ENCODE measurements at regions of chr9 and their contacts with region 1.

Region 1: GRCh38 chr9:13971966-13972655 is 341.8 kb downstream of the NFIB start:
- DNase-seq: no peak
- ATAC-seq: peak; percentile 10 to 60
- H3K4me3 ChIP-seq: no peak overlapping the region
- H3K27ac ChIP-seq: peak overlapping the region; percentile 24
- H3K4me1 ChIP-seq: peaks cover 15% of the 10 kb centered on the region
- H3K27me3 ChIP-seq: no peaks in the 10 kb centered on the region

Region 2: GRCh38 chr9:13750061-13750460 is 222.1 kb before region 1 on chr9:
- intact Hi-C with region 1: no loop called
- DNase-seq: no peak
- ATAC-seq: peak in 1 of 2 donors; percentile 55
- H3K4me3 ChIP-seq: no peak overlapping the region
- H3K27ac ChIP-seq: no peak overlapping the region
- H3K4me1 ChIP-seq: no peaks in the 10 kb centered on the region
- H3K27me3 ChIP-seq: no peaks in the 10 kb centered on the region

Region 3: GRCh38 chr9:13915591-13916326 is 56.4 kb before region 1 on chr9:
- intact Hi-C with region 1: loop called in 1 of 4 experiments (anchors 10 kb)
- DNase-seq: no peak
- ATAC-seq: peak in 1 of 2 donors; percentile 18
- H3K4me3 ChIP-seq: no peak overlapping the region
- H3K27ac ChIP-seq: no peak overlapping the region
- H3K4me1 ChIP-seq: peaks cover 4% of the 10 kb centered on the region
- H3K27me3 ChIP-seq: no peaks in the 10 kb centered on the region

Region 4: DNA sequence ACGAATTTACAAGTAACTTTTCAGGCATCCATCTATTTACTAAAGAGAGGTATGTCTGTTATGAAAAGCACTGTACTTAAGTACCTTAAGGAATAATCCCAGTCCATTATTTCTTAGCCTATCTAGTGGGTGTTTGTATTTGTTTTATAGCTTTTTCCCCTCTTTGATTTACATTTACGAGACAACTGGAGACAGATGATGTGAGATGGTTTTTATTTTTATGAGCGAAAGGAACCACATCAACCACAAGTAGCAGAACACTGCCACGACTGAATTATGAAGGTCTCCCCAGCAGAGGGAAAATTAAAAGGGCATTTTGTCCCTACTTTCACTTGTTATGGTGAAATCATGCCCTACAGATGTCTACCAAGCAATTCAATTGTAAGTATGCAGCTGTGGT is 16.0 kb before region 1 on chr9:
- intact Hi-C with region 1: no loop called
- DNase-seq: no peak
- ATAC-seq: no peak
- H3K4me3 ChIP-seq: no peak overlapping the region
- H3K27ac ChIP-seq: no peak overlapping the region
- H3K4me1 ChIP-seq: peaks cover 1% of the 10 kb centered on the region
- H3K27me3 ChIP-seq: no peaks in the 10 kb centered on the region

Region 5: GRCh38 chr9:14702200-14702720 is 730.1 kb after region 1 on chr9:
- intact Hi-C with region 1: no loop called
- DNase-seq: no peak
- ATAC-seq: no peak
- H3K4me3 ChIP-seq: no peak overlapping the region
- H3K27ac ChIP-seq: no peak overlapping the region
- H3K4me1 ChIP-seq: no peaks in the 10 kb centered on the region
- H3K27me3 ChIP-seq: no peaks in the 10 kb centered on the region